Heart left ventricle (tissue), 16 donors: ENCODE measurements at regions of chr22 and their contacts with region 1.

Region 1: GRCh38 chr22:38843201-38843715 is 570 bp downstream of the NPTXR start:
- DNase-seq: peak; percentile 34 to 77 (median 55)
- ATAC-seq: peak; percentile 56 to 76 (median 74)
- H3K4me3 ChIP-seq: peak overlapping the region; percentile 40 to 69 (median 55)
- H3K27ac ChIP-seq: peak overlapping the region in 10 of 12 donors; percentile 53 to 80 (median 64)
- H3K4me1 ChIP-seq: peaks cover 0 to 27% (median 9%) of the 10 kb centered on the region in 12 donors
- H3K27me3 ChIP-seq: peaks cover 0 to 45% (median 2%) of the 10 kb centered on the region in 9 donors
- CTCF ChIP-seq: peak in 11 of 12 donors; percentile 10 to 54 (median 32)
- POLR2A ChIP-seq: no peak

Region 2: GRCh38 chr22:38657045-38657909 is 186.0 kb before region 1 on chr22:
- intact Hi-C with region 1: no loop called
- DNase-seq: no peak
- ATAC-seq: no peak
- H3K4me3 ChIP-seq: peak overlapping the region; percentile 68 to 95 (median 91)
- H3K27ac ChIP-seq: peak overlapping the region in 11 of 12 donors; percentile 89 to 99 (median 93)
- H3K4me1 ChIP-seq: peaks cover 0 to 24% (median 15%) of the 10 kb centered on the region in 12 donors
- H3K27me3 ChIP-seq: no peaks in the 10 kb centered on the region
- CTCF ChIP-seq: no peak
- POLR2A ChIP-seq: no peak

Region 3: GRCh38 chr22:38788021-38788816 is 55.0 kb before region 1 on chr22:
- intact Hi-C with region 1: loop called in 2 of 10 experiments (anchors 10 kb)
- DNase-seq: peak in 4 of 5 donors; percentile 54 to 74 (median 64)
- ATAC-seq: peak; percentile 68 to 89 (median 85)
- H3K4me3 ChIP-seq: no peak overlapping the region
- H3K27ac ChIP-seq: peak overlapping the region; percentile 69 to 92 (median 82)
- H3K4me1 ChIP-seq: peaks cover 4 to 68% (median 40%) of the 10 kb centered on the region in 12 donors
- H3K27me3 ChIP-seq: no peaks in the 10 kb centered on the region
- CTCF ChIP-seq: no peak
- POLR2A ChIP-seq: peak in 1 of 2 donors; percentile 33

Region 4: GRCh38 chr22:38793721-38794466 is 49.4 kb before region 1 on chr22 and contains the start of gene DNAL4:
- intact Hi-C with region 1: loop called in 2 of 10 experiments (anchors 10 kb)
- DNase-seq: peak; percentile 93 to 98 (median 95)
- ATAC-seq: peak; percentile 97 to 98 (median 97)
- H3K4me3 ChIP-seq: peak within 1 kb of the TSS; percentile 64 to 94 (median 86)
- H3K27ac ChIP-seq: peak within 1 kb of the TSS; percentile 76 to 93 (median 85)
- H3K4me1 ChIP-seq: peaks cover 0 to 26% (median 18%) of the 10 kb centered on the region in 12 donors
- H3K27me3 ChIP-seq: no peaks in the 10 kb centered on the region
- CTCF ChIP-seq: no peak
- POLR2A ChIP-seq: peak in 1 of 2 donors; percentile 66
- total RNA-seq, gene DNAL4: 8.2 to 16.4 (median 10.4) TPM

Region 5: DNA sequence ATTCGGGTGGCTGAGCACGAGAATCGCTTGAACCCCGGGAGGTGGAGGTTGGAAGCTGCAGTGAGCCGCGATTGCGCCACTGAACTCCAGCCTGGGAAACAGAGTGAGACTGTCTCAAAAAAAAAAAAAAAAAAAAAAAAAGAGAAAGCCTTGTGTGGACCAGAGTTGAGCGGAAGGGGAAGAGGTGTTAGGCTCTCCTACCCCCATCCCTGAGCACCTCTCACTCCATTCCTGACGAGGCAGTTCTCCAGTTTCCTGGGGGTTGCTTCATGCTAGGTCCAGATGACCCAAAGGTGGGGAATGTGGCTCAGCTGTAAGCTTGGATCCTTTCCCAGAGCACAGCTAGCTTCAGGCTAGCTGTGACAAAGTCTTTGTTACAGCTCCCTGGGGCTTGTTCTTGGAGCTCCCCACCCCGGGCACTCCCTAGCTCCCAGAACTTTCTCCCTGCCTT is 40.6 kb before region 1 on chr22:
- intact Hi-C with region 1: loop called in 2 of 10 experiments (anchors 5 to 10 kb)
- DNase-seq: peak in 3 of 5 donors; percentile 30 to 69 (median 45)
- ATAC-seq: peak; percentile 26 to 90 (median 84)
- H3K4me3 ChIP-seq: no peak overlapping the region
- H3K27ac ChIP-seq: no peak overlapping the region
- H3K4me1 ChIP-seq: peaks cover 0 to 7% (median 1%) of the 10 kb centered on the region in 12 donors
- H3K27me3 ChIP-seq: no peaks in the 10 kb centered on the region
- CTCF ChIP-seq: no peak
- POLR2A ChIP-seq: no peak

Region 6: DNA sequence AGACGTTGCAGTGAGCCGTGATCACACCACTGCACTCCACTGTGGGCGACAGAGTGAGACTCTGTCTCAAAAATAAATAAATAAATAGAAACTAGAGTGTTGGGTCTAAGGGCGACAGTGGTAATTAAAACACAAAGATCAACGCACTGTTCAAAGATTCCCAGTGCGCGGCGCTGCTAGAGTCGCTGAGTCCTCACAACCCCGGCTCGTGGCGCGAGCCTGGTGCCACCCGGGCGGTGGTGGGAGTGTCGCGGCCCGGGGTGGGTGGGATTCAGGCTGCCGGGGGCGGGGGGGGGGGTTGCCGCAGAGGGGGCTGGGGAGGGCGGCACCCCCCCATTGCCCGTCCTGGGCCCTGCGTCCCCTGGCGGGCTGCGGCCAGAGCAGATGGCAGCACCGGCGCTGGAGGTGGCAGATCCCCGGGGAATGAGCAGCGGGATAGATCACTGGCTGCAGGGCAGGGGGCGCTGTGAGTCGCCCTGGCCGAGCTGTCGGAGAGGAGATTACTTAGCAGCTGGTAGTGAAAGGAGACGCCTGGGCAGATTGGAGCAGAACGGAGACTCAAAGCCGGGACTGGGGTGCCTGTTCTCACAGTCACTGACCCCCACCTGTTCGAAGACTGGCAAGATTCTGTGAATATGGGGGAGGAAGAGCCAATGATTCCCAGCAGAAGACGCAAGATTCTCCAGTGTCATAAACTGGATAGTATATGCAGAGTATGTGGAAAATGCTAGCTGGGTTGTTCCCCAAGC is 83.9 kb after region 1 on chr22:
- intact Hi-C with region 1: no loop called
- DNase-seq: peak; percentile 67 to 88 (median 81)
- ATAC-seq: peak; percentile 49 to 84 (median 76)
- H3K4me3 ChIP-seq: peak overlapping the region in 9 of 12 donors; percentile 29 to 45 (median 39)
- H3K27ac ChIP-seq: peak overlapping the region in 11 of 12 donors; percentile 10 to 75 (median 66)
- H3K4me1 ChIP-seq: peaks cover 0 to 33% (median 19%) of the 10 kb centered on the region in 12 donors
- H3K27me3 ChIP-seq: peaks cover 0 to 15% (median 0%) of the 10 kb centered on the region in 9 donors
- CTCF ChIP-seq: peak; percentile 36 to 84 (median 66)
- POLR2A ChIP-seq: no peak